Endothelial cell of umbilical vein (primary cell): ENCODE measurements at regions of chr11 and their contacts with region 1.

Region 1: GRCh38 chr11:103682318-103683184 is 353.9 kb upstream of the DDI1 start:
- DNase-seq: peak; percentile 86
- H3K4me3 ChIP-seq: no peak overlapping the region
- H3K27ac ChIP-seq: no peak overlapping the region
- H3K4me1 ChIP-seq: peaks cover 19% of the 10 kb centered on the region
- H3K27me3 ChIP-seq: no peaks in the 10 kb centered on the region
- CTCF ChIP-seq: peak; percentile 67 to 81
- POLR2A ChIP-seq: no peak

Region 2: DNA sequence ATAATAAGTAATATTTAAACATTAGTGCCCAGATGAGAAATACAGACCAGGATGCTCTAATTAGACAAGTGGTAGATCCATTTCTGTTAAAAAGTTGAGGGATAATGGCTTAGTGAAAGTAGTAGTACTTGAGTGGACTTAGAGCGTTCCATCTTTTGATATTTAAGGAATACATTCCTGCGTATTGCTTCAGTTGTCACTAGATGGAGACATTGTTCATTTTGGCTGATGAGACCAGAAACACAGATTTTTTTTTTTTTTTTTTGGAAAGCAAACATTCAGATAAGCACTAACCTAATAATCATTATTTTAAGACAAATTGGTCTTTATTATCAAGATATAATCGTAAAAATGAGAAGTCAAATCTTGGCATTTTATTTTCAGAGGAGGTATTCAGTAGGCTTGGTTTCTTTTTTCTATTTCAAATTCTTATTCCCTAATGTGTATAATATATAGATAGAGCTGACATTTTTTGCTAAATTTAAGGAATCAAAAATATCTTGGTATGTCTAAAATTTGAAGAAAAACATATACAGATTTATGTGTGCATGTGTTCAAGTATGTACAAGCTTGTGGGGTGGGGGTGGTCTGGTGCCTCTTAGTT is 480.4 kb before region 1 on chr11:
- CTCF ChIA-PET with region 1: interaction called, 16 read pairs
- POLR2A ChIA-PET with region 1: no interaction called
- dilution Hi-C with region 1: no loop called
- intact Hi-C with region 1: loop called (anchors 2 kb)
- DNase-seq: peak; percentile 56
- H3K4me3 ChIP-seq: no peak overlapping the region
- H3K27ac ChIP-seq: no peak overlapping the region
- H3K4me1 ChIP-seq: no peaks in the 10 kb centered on the region
- H3K27me3 ChIP-seq: no peaks in the 10 kb centered on the region
- CTCF ChIP-seq: peak; percentile 42 to 50
- POLR2A ChIP-seq: no peak

Region 3: DNA sequence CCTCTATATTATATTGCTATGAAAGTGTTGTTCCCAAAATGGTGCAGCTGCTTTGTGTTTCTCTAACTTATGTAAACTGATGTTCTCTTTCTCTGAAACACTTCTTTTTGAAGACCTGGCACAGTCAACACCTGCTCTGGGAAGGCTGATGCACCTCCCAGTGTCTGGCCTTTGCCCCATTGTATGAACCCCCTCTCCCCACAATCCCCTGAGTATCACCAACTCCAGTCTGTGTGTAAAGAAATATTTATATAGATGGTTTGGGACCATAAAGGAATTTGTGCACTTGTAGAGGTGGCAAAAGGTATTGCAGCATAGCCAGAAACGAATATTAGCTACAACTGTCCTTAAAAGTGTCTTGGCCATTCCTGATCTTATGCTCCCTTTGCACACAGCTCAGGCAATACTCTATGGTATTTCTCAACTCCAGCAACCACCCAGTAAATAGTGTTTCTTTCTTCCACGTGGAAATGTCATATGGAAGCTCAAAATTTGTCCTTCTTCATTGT is 11.4 kb before region 1 on chr11:
- CTCF ChIA-PET with region 1: interaction called, 22 read pairs
- POLR2A ChIA-PET with region 1: no interaction called
- dilution Hi-C with region 1: no loop called
- intact Hi-C with region 1: no loop called
- DNase-seq: no peak
- H3K4me3 ChIP-seq: no peak overlapping the region
- H3K27ac ChIP-seq: no peak overlapping the region
- H3K4me1 ChIP-seq: peaks cover 3% of the 10 kb centered on the region
- H3K27me3 ChIP-seq: no peaks in the 10 kb centered on the region
- CTCF ChIP-seq: no peak
- POLR2A ChIP-seq: no peak

Region 4: DNA sequence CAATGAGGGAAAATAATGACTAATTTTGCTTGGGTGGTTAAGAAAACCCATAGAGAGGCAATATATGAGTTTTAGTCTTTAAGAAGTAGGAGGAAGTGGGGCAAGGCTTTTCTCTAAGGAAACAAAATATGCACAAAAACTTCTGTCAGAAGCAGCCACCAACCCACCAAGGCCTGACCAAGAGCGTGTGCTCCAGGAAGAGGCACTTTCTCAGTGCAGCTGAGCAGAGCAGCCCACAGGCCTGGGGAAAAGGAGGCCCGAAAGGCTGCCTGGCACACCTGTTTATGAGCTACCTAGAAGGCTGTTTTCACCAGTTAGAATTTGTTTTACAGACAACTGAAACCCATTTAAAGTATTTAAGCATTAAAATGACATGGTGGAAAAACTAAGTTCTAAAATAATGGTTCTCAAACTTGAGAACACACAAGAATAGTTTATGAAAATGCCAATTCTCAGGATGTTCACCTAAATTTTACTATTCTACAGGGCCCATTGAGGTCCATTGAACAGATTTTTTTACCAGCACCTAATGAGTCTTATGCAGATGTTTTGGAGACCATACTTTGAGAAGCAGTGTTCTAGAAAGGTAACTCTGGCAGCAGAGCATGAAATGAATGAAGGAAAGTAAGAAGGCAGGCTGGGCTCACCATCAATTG is 193.4 kb after region 1 on chr11:
- CTCF ChIA-PET with region 1: interaction called, 13 read pairs
- POLR2A ChIA-PET with region 1: no interaction called
- dilution Hi-C with region 1: no loop called
- intact Hi-C with region 1: loop called (anchors 2 kb)
- DNase-seq: no peak
- H3K4me3 ChIP-seq: no peak overlapping the region
- H3K27ac ChIP-seq: no peak overlapping the region
- H3K4me1 ChIP-seq: no peaks in the 10 kb centered on the region
- H3K27me3 ChIP-seq: no peaks in the 10 kb centered on the region
- CTCF ChIP-seq: no peak
- POLR2A ChIP-seq: no peak

Region 5: GRCh38 chr11:103927535-103927934 is 245.0 kb after region 1 on chr11:
- CTCF ChIA-PET with region 1: interaction called, 9 read pairs
- POLR2A ChIA-PET with region 1: no interaction called
- dilution Hi-C with region 1: no loop called
- intact Hi-C with region 1: loop called (anchors 2 kb)
- DNase-seq: no peak
- H3K4me3 ChIP-seq: no peak overlapping the region
- H3K27ac ChIP-seq: no peak overlapping the region
- H3K4me1 ChIP-seq: no peaks in the 10 kb centered on the region
- H3K27me3 ChIP-seq: no peaks in the 10 kb centered on the region
- CTCF ChIP-seq: no peak
- POLR2A ChIP-seq: no peak

Region 6: GRCh38 chr11:104254347-104254746 is 571.8 kb after region 1 on chr11:
- CTCF ChIA-PET with region 1: interaction called, 15 read pairs
- POLR2A ChIA-PET with region 1: no interaction called
- dilution Hi-C with region 1: no loop called
- intact Hi-C with region 1: loop called (anchors 5 kb)
- DNase-seq: peak; percentile 23
- H3K4me3 ChIP-seq: no peak overlapping the region
- H3K27ac ChIP-seq: no peak overlapping the region
- H3K4me1 ChIP-seq: no peaks in the 10 kb centered on the region
- H3K27me3 ChIP-seq: no peaks in the 10 kb centered on the region
- CTCF ChIP-seq: peak; percentile 52 to 62
- POLR2A ChIP-seq: no peak